ENCODE measurements at regions of chr1 and their contacts with region 1.

Region 1: DNA sequence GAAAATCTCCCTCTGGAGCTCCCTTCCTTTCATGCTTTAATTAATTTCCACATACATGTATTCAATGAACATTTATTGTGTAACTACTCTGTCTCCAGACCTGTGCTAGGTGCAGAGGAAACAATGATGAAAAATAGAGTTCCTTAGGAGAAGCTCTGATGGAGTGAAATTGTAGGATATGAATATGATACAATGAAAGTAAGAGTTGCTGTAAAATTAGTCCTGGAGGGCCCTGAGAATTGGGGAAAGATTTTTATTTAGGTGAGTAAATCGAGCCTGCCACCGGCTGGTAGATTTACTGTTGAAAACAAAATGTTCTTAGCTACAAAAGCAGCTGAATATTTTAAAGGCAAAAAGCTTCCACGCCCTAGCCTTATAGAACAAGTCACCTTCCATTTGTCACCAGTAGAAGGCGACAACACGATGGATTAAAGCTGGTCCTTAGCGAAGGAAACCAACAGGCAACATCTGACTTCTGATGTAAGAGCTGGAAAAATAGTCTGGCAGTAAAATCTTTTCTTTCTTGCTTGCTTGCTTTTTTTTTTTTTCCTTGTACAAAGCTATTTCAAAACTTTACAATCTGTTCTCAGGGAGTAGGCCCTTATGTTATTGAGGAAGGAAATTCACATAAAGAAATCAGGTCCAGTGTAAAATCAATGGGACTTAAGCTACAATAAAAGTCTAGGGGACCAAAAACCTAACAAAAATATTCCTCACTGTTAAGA is 82.0 kb upstream of the ROR1 start:
- DNase-seq: peak; percentile 64
- ATAC-seq: peak; percentile 61
- H3K4me3 ChIP-seq: no peak overlapping the region
- H3K4me3 Mint-ChIP-seq: no peak overlapping the region
- H3K27ac ChIP-seq: no peak overlapping the region
- H3K27ac Mint-ChIP-seq: no peak overlapping the region
- H3K4me1 ChIP-seq: no peaks in the 10 kb centered on the region
- H3K4me1 Mint-ChIP-seq: no peaks in the 10 kb centered on the region
- H3K27me3 ChIP-seq: peaks cover 0 to 3% (median 0%) of the 10 kb centered on the region in 4 experiments
- H3K27me3 Mint-ChIP-seq: peaks cover 1% of the 10 kb centered on the region
- CTCF ChIP-seq: peak; percentile 83

Region 2: GRCh38 chr1:63615768-63616420 is 76.0 kb before region 1 on chr1:
- CTCF ChIA-PET with region 1: interaction called, 11 read pairs
- POLR2A ChIA-PET with region 1: no interaction called
- intact Hi-C with region 1: loop called (anchors 5 kb)
- DNase-seq: peak; percentile 80
- ATAC-seq: peak; percentile 71
- H3K4me3 ChIP-seq: no peak overlapping the region
- H3K4me3 Mint-ChIP-seq: no peak overlapping the region
- H3K27ac ChIP-seq: no peak overlapping the region
- H3K27ac Mint-ChIP-seq: no peak overlapping the region
- H3K4me1 ChIP-seq: no peaks in the 10 kb centered on the region
- H3K4me1 Mint-ChIP-seq: no peaks in the 10 kb centered on the region
- H3K27me3 ChIP-seq: no peaks in the 10 kb centered on the region
- H3K27me3 Mint-ChIP-seq: no peaks in the 10 kb centered on the region
- CTCF ChIP-seq: peak; percentile 91

Region 3: DNA sequence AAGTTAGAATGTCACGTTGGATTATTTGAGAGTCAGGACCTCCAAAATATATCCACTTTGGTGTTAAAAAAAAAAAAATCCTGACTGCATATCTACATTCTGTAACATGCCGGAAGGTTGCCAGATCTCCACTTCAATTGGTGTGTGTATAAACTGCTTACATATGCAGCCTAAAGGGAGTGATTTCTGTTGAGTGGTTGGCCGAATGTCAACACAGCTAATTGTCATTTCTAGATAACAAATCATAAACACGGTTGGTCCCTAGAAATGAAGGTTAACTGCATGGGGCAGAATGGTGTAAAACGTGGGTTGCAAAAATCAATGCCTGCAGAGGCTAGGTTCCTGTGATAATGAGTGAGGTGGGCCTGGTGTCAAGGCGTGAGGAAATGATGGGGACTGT is 66.9 kb after region 1 on chr1:
- CTCF ChIA-PET with region 1: interaction called, 11 read pairs
- POLR2A ChIA-PET with region 1: no interaction called
- intact Hi-C with region 1: no loop called
- DNase-seq: no peak
- ATAC-seq: no peak
- H3K4me3 ChIP-seq: no peak overlapping the region
- H3K4me3 Mint-ChIP-seq: no peak overlapping the region
- H3K27ac ChIP-seq: no peak overlapping the region
- H3K27ac Mint-ChIP-seq: no peak overlapping the region
- H3K4me1 ChIP-seq: no peaks in the 10 kb centered on the region
- H3K4me1 Mint-ChIP-seq: peaks cover 3% of the 10 kb centered on the region
- H3K27me3 ChIP-seq: no peaks in the 10 kb centered on the region
- H3K27me3 Mint-ChIP-seq: peaks cover 5% of the 10 kb centered on the region
- CTCF ChIP-seq: no peak

Region 4: DNA sequence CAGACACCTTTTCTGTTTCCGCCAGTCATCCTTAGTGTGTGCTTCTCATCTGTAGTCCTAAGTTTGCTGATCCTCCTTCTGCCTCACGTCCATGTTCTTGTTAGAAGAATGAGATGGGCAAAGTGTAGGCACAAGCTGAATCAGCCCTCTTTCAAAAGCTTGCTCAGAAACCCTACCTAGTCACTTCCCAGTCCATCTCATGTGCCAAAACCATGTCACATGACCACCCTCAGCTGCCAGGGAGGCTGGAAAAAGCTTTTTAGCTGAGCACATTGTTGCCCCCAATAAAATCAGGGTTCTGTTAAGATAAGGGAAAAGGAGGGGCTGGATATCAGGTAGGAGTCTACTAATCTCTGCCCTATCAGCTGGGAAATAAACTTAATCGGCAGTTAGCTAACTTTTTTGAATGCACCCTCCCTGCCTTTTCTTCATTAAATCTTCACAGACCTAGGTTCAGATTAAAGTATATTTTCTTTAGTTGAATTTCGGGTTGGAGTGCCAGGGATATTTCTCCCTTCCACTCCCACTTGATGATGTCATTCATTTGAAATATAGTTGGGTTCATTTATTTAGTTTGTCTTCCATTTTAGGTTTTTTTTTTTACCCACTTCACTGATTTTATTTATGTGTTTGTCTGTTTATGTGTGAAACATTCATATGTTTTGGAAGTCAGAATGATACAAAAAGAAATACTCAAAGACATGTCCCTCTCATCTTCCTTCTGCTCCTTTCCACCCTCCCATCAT is 211.2 kb after region 1 on chr1:
- CTCF ChIA-PET with region 1: interaction called, 10 read pairs
- POLR2A ChIA-PET with region 1: no interaction called
- intact Hi-C with region 1: no loop called
- DNase-seq: no peak
- ATAC-seq: no peak
- H3K4me3 ChIP-seq: no peak overlapping the region
- H3K4me3 Mint-ChIP-seq: no peak overlapping the region
- H3K27ac ChIP-seq: no peak overlapping the region
- H3K27ac Mint-ChIP-seq: no peak overlapping the region
- H3K4me1 ChIP-seq: peaks cover 7 to 9% of the 10 kb centered on the region in 2 donors
- H3K4me1 Mint-ChIP-seq: peaks cover 11% of the 10 kb centered on the region
- H3K27me3 ChIP-seq: peaks cover 0 to 15% (median 2%) of the 10 kb centered on the region in 4 experiments
- H3K27me3 Mint-ChIP-seq: peaks cover 33% of the 10 kb centered on the region
- CTCF ChIP-seq: no peak

Region 5: DNA sequence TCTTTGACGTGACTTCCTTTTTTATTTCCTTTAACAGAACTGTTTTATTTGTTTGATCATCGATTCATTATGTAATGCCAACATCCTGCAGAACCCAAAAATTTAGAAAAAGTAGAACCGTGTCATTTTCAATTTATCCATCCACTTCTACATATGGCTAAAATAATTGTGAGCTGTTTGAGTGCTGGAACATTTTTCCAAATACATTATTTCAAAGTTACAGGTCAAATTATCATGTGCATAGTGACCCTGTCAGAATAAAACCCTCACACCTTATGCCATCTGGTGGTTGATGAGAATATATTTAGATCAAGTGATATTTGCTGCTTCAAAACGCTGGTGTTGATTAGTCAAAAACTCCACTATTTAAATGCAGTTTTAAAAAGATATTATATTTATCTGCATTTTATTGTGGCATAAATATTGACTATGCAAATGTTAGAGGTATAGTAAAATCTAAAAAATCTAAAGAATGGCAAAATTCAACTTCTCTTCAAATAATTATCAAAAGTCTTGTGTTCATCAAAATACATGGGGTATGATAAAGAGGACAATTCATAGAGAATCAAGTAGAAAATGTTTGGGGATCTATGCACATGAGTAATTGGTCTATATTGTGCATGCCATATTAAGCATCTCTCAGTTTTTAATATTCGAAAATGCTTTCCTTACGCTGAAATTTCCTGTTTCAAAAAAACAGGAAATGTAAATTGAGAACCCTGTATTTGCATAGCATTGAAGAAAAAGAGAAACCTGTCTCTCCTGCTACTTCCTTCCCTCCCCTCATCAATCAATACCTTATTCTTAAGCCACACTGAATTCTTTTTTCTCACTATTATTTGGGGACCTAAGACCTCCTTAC is 551.3 kb after region 1 on chr1:
- CTCF ChIA-PET with region 1: interaction called, 34 read pairs
- POLR2A ChIA-PET with region 1: no interaction called
- intact Hi-C with region 1: no loop called
- DNase-seq: peak; percentile 21
- ATAC-seq: no peak
- H3K4me3 ChIP-seq: peak overlapping the region in 1 of 5 experiments; percentile 44
- H3K4me3 Mint-ChIP-seq: peak overlapping the region; percentile 60
- H3K27ac ChIP-seq: no peak overlapping the region
- H3K27ac Mint-ChIP-seq: no peak overlapping the region
- H3K4me1 ChIP-seq: peaks cover 9 to 13% of the 10 kb centered on the region in 2 donors
- H3K4me1 Mint-ChIP-seq: peaks cover 13% of the 10 kb centered on the region
- H3K27me3 ChIP-seq: peaks cover 0 to 13% (median 1%) of the 10 kb centered on the region in 4 experiments
- H3K27me3 Mint-ChIP-seq: peaks cover 19% of the 10 kb centered on the region
- CTCF ChIP-seq: peak; percentile 63